ENCODE measurements at regions of chr3 and their contacts with region 1.

Region 1: DNA sequence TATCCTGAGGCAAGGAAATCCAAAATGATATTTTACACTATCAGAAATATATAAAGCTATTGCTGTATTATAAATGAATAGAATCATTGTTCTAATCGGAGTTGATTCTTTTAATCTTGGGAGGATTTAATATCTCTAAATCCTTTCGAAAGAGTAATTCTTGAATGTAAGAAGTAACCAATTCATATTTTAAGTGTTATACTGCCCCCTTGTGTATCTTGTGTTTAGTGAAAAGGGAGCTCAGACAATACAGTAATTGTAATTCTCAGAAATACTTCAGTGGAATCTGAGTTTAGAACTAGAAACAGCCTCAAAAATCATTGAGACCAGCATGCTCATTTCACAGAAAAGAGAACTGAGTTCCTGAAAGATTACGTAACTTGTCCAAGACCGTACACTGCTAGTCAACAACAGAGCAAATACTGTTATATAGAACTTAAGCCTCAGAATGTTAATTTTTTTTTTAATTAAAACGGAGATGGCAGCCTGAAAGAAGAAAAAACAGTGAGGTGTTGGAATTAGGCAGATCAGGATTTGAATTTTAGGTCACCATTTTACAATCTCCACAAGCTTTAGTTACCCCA is 42.9 kb downstream of the PLCH1 start:
- DNase-seq: no peak
- H3K4me3 ChIP-seq: no peak overlapping the region
- H3K27ac ChIP-seq: no peak overlapping the region
- H3K4me1 ChIP-seq: no peaks in the 10 kb centered on the region
- H3K27me3 ChIP-seq: no peaks in the 10 kb centered on the region
- CTCF ChIP-seq: peak; percentile 30 to 81 (median 56)
- POLR2A ChIP-seq: no peak

Region 2: GRCh38 chr3:155352900-155353490 is 349.0 kb before region 1 on chr3:
- intact Hi-C with region 1: loop called (anchors 5 kb)
- DNase-seq: no peak
- H3K4me3 ChIP-seq: no peak overlapping the region
- H3K27ac ChIP-seq: no peak overlapping the region
- H3K4me1 ChIP-seq: no peaks in the 10 kb centered on the region
- H3K27me3 ChIP-seq: no peaks in the 10 kb centered on the region
- CTCF ChIP-seq: peak in 5 of 6 experiments; percentile 31 to 54 (median 36)
- POLR2A ChIP-seq: no peak

Region 3: DNA sequence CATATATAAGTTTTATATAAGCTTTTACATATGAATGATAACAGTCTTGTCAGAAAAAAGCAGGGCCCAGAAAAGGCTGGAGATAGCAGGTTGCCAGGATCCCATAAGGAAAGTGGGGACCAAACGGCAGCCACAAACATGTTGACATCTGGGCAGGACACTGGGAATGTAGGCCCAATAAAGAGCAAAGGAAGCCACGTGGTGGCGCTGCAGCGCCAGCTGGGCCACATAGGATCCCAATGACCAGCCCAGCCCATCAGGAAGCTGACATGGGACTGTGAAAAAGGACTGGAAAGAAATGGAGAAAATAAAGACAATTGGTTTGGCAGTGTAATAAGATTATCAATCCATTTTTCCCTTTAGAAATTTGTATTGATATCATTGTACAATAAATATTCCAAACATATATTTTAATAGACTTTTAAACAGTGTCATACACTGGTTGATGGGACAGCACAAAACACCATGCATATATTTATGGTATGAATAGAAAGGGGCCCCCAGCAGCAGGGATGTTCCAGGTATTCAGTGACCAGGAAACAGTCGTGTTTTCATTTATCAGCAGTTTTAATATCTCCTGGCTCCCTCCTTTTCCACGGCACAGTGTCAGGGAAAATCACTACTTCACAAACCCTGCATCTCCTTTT is 319.5 kb before region 1 on chr3:
- intact Hi-C with region 1: loop called (anchors 10 kb)
- DNase-seq: no peak
- H3K4me3 ChIP-seq: no peak overlapping the region
- H3K27ac ChIP-seq: no peak overlapping the region
- H3K4me1 ChIP-seq: no peaks in the 10 kb centered on the region
- H3K27me3 ChIP-seq: no peaks in the 10 kb centered on the region
- CTCF ChIP-seq: peak in 5 of 6 experiments; percentile 44 to 73 (median 53)
- POLR2A ChIP-seq: no peak